AG04449 (cell line): ENCODE measurements at regions of chr12 and their contacts with region 1.

Region 1: DNA sequence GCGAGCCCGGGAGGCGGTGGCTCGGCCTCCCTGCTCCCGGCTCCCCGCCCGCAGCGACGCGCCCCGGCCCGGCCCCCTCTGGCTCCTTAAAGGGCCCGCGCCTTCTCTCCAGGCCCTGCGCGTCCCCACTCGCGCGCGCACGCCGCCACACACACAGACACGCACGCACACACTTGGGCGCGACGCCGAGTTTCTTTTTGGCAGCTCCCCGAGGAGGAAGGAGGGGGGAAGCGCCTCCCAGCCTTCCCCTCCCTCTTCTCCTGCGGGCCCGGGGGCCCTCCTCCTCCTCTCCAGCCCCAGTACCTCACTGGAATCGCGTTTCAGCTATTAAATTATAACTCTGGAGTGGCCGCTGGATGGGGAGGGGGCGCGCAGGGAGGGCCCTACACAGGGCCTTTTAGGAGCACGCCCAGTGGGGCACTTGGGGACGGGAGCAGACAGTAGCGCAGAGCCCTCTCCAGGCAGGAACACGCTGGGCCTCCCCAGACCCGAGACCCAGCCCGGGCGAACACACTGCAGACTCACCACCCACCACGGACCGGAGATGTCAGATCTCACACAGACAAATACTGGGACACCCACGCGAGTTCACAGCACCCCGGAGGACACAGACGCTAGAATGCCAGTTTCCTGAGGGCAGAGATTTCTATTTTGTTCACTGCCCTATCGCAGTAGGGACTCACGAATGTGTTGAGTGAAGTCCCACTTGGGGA is 405 bp upstream of the NCOR2 start:
- DNase-seq: peak; percentile 83
- H3K4me3 ChIP-seq: peak overlapping the region; percentile 45
- CTCF ChIP-seq: peak; percentile 29

Region 2: DNA sequence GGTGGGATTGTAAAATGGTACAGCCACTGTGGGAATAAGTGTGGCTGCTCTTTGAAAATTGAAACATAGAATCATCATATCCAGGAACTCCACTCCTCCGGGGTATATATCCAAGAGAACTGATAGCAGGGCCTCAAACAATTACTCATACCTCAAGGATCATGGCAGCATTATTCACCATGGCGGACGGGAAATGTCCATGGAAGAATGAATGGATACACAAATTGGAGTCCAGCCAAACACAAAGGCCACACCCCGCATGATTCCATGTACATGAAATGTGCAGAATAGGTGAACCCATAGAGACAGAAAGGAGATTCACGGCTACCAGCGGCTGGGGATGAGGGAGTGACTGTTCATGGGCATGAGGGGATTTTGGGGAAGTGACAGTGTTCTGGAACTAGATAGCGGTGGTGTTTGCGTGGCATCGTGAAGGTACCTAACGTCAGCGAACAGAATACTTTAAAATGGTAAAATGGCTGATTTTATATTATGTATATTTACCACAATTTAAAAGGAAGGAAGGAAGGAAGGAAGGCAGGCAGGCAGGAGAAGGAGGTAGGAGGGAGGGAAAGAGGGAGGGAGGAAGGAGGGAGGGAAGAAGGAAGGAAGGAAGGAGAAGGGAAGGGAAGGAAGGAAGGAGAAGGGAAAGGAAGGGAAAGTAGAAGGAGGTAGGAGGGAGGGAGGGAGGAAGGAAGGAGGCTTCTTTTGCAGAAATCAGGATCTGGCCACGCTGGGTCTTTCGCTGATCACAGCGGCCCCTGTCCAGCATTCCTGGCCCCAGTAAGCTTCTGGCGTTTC is 13.7 kb after region 1 on chr12:
- CTCF ChIA-PET with region 1: interaction called, 10 read pairs
- POLR2A ChIA-PET with region 1: no interaction called
- DNase-seq: no peak
- H3K4me3 ChIP-seq: no peak overlapping the region
- CTCF ChIP-seq: no peak